ENCODE measurements at regions of chrX and their contacts with region 1.

Region 1: GRCh38 chrX:17788439-17788838 is 51.1 kb downstream of the SCML1 start:
- DNase-seq: peak in 8 of 9 experiments; percentile 1 to 63 (median 42)
- ATAC-seq: peak; percentile 54
- H3K4me3 ChIP-seq: no peak overlapping the region
- H3K4me3 Mint-ChIP-seq: no peak overlapping the region
- H3K27ac ChIP-seq: no peak overlapping the region
- H3K27ac Mint-ChIP-seq: no peak overlapping the region
- H3K4me1 ChIP-seq: no peaks in the 10 kb centered on the region
- H3K4me1 Mint-ChIP-seq: peaks cover 9% of the 10 kb centered on the region
- H3K27me3 ChIP-seq: no peaks in the 10 kb centered on the region
- H3K27me3 Mint-ChIP-seq: no peaks in the 10 kb centered on the region
- CTCF ChIP-seq: peak; percentile 57

Region 2: DNA sequence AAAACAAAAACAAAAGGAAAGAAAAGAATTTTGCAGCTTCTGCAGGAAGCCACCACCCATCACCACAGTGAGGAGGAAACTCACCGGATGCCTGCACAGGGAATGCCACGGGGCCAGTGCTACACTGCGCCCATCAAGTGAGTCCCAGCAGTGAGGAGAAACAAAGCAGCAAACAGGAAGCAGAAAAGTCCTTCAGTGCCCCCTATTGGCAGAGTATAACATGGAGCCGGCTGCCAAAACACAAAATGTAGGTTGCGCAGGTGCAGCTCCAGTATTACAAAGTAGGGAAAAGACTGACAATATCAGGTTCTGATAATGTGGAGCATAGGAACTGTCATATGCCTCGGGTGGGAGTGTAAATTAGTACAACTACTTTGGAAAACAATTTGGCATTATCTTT is 589.4 kb after region 1 on chrX:
- CTCF ChIA-PET with region 1: interaction called, 3 read pairs
- POLR2A ChIA-PET with region 1: no interaction called
- intact Hi-C with region 1: loop called (anchors 2 to 5 kb)
- DNase-seq: peak in 4 of 9 experiments; percentile 11 to 53 (median 26)
- ATAC-seq: peak; percentile 49
- H3K4me3 ChIP-seq: no peak overlapping the region
- H3K4me3 Mint-ChIP-seq: no peak overlapping the region
- H3K27ac ChIP-seq: no peak overlapping the region
- H3K27ac Mint-ChIP-seq: no peak overlapping the region
- H3K4me1 ChIP-seq: no peaks in the 10 kb centered on the region
- H3K4me1 Mint-ChIP-seq: peaks cover 5% of the 10 kb centered on the region
- H3K27me3 ChIP-seq: no peaks in the 10 kb centered on the region
- H3K27me3 Mint-ChIP-seq: no peaks in the 10 kb centered on the region
- CTCF ChIP-seq: peak; percentile 29

Region 3: GRCh38 chrX:19064175-19064574 is 1275.7 kb after region 1 on chrX:
- CTCF ChIA-PET with region 1: no interaction called
- POLR2A ChIA-PET with region 1: no interaction called
- intact Hi-C with region 1: no loop called
- DNase-seq: no peak
- ATAC-seq: no peak
- H3K4me3 ChIP-seq: no peak overlapping the region
- H3K4me3 Mint-ChIP-seq: no peak overlapping the region
- H3K27ac ChIP-seq: no peak overlapping the region
- H3K27ac Mint-ChIP-seq: no peak overlapping the region
- H3K4me1 ChIP-seq: no peaks in the 10 kb centered on the region
- H3K4me1 Mint-ChIP-seq: no peaks in the 10 kb centered on the region
- H3K27me3 ChIP-seq: no peaks in the 10 kb centered on the region
- H3K27me3 Mint-ChIP-seq: no peaks in the 10 kb centered on the region
- CTCF ChIP-seq: no peak

Measured in CD8-positive, alpha-beta T cell (primary cell).